Activated B cell treated with CpG ODN at 0.5 μM for 24 hours (primary cell): ENCODE measurements at regions of chr19 and their contacts with region 1.

Region 1: DNA sequence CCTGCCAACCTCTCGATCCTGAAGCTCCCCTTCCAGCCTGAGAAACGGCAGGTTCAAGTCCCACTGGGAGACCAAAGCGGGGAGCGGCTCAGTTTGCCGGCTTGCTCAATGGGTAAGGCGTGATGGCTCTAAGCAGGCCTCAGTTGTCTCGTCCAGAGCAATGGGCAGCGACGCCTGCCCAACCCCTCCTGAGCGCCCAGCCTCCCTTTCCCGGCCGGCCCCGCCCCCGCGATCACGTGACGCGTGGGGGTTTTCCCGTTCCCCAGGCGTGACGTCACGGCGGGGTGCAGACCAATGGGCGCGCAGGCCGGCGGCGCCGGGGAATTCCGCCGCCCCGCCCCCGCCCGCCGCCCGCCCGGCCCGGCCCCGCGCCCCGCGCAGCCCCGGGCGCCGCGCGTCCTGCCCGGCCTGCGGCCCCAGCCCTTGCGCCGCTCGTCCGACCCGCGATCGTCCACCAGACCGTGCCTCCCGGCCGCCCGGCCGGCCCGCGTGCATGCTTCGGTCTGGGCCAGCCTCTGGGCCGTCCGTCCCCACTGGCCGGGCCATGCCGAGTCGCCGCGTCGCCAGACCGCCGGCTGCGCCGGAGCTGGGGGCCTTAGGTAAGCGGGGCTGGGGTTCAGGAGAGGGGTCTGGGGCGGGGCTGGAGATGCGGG is at the start of gene RELB:
- DNase-seq: peak; percentile 99
- ATAC-seq: peak; percentile 43
- H3K4me3 Mint-ChIP-seq: peak within 1 kb of the TSS; percentile 98
- H3K27ac Mint-ChIP-seq: peak within 1 kb of the TSS; percentile 99
- H3K4me1 Mint-ChIP-seq: peaks cover 36% of the 10 kb centered on the region
- H3K27me3 Mint-ChIP-seq: no peaks in the 10 kb centered on the region
- CTCF ChIP-seq: no peak
- total RNA-seq, gene RELB: 117 and 135 TPM in 2 replicates

Region 2: DNA sequence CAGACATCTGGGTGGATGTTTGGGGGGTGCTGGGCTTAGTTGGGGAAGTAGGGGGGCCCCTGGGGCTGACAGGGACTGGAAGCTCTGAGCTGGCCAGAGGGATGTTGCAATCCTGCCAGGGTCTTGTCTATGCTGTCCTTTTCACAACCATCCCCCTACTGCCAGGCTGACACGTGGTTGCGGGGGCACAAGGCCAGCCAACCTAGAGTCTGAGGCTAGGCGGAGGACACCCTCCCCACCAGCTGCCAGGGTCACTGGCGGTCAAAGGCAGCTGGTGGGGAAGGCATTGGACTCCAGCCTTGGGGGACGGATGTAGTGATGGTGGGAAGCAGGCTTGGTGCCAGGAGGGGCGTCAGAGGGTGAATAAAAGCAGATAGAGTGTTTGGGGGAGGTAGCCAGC is 88.4 kb before region 1 on chr19:
- CTCF ChIA-PET with region 1: no interaction called
- POLR2A ChIA-PET with region 1: interaction called, 11 read pairs
- intact Hi-C with region 1: no loop called
- DNase-seq: no peak
- ATAC-seq: no peak
- H3K4me3 Mint-ChIP-seq: no peak overlapping the region
- H3K27ac Mint-ChIP-seq: no peak overlapping the region
- H3K4me1 Mint-ChIP-seq: peaks cover 11% of the 10 kb centered on the region
- H3K27me3 Mint-ChIP-seq: peaks cover 28% of the 10 kb centered on the region
- CTCF ChIP-seq: no peak

Region 3: GRCh38 chr19:44960906-44961728 is 40.1 kb before region 1 on chr19:
- CTCF ChIA-PET with region 1: no interaction called
- POLR2A ChIA-PET with region 1: interaction called, 26 read pairs
- intact Hi-C with region 1: no loop called
- DNase-seq: peak; percentile 22
- ATAC-seq: peak; percentile 93
- H3K4me3 Mint-ChIP-seq: peak overlapping the region; percentile 61
- H3K27ac Mint-ChIP-seq: peak overlapping the region; percentile 86
- H3K4me1 Mint-ChIP-seq: peaks cover 63% of the 10 kb centered on the region
- H3K27me3 Mint-ChIP-seq: no peaks in the 10 kb centered on the region
- CTCF ChIP-seq: no peak

Region 4: GRCh38 chr19:45016388-45017319 is 15.4 kb after region 1 on chr19:
- CTCF ChIA-PET with region 1: interaction called, 4 read pairs
- POLR2A ChIA-PET with region 1: interaction called, 38 read pairs
- intact Hi-C with region 1: loop called (anchors 1 kb)
- DNase-seq: peak; percentile 62
- ATAC-seq: peak; percentile 81
- H3K4me3 Mint-ChIP-seq: peak overlapping the region; percentile 64
- H3K27ac Mint-ChIP-seq: peak overlapping the region; percentile 89
- H3K4me1 Mint-ChIP-seq: peaks cover 22% of the 10 kb centered on the region
- H3K27me3 Mint-ChIP-seq: no peaks in the 10 kb centered on the region
- CTCF ChIP-seq: no peak

Region 5: DNA sequence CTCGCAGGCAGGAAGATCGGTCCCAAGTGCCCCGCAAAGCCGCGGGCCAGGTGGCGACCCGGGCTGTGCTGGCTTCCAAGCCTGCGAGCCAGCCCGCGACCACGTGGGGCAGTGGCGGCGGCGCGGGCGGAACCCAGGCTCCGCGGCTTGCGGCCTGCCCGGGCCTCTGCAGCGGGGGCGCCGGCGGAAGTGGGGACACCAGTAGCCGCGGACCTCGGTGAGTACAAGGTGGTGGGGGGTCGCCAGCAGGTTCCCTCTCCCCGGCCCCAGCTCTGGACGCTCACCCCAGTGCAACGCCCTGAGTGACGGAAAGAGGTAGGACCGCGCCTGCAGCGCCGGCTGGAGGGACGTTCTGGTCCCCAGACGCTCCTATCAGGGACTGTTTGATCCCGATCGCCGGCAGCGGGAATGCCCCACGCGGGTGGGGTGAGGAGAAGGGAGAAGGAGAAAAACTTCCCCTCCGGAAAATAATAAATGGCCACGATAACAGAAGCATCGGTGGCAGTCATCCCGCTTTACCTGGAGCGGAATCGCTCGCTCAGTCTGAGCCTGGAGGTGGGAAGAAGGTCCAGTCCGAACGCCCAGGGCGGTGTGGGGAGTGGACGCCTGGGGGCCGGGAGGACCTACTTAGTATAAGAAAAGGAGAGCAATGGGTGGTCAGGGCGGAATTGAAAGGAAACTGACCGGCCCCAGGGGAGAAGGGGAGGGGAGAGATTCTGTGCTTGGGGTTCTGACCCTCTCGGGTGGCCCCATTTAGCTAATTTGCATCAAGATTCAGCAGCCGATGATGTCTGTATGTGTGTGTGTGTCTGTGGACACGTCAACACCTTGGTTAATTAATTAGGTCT is 78.1 kb after region 1 on chr19 and contains the start of gene GEMIN7:
- CTCF ChIA-PET with region 1: no interaction called
- POLR2A ChIA-PET with region 1: interaction called, 33 read pairs
- intact Hi-C with region 1: loop called (anchors 1 kb)
- DNase-seq: peak; percentile 85
- ATAC-seq: peak; percentile 33
- H3K4me3 Mint-ChIP-seq: peak within 1 kb of the TSS; percentile 97
- H3K27ac Mint-ChIP-seq: peak within 1 kb of the TSS; percentile 90
- H3K4me1 Mint-ChIP-seq: peaks cover 60% of the 10 kb centered on the region
- H3K27me3 Mint-ChIP-seq: no peaks in the 10 kb centered on the region
- CTCF ChIP-seq: no peak
- total RNA-seq, gene GEMIN7: 37.0 and 38.7 TPM in 2 replicates

Region 6: DNA sequence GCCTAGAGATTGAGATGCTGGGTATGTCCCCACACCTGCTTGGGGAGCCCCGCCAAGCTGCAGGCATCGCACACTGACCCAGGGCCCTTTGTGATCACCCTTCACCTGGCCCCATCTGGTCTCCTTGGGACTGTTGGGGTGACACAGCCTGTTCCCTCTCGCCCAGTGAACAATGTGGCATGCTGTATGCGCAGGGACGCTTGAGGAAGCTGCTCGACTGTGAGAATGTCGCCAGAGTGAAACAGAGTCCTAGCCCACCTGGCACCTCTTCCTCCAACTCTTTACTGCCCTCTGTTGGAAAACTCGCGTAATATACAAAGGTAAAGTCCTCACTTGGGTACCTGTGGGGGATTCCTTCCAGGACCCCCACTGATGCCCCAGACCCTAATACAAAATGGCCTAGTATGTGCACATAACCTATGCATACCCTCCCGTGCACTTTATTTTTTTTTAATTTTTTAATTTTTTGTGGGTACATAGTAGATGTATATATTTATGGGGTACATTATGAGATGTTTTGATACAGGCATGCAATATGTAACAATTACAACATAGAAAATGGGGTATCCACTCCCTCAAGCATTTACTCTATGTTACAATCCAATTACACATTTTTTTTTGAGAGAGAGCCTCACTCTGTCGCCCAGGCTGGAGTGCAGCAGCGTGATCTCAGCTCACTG is 186.3 kb after region 1 on chr19:
- CTCF ChIA-PET with region 1: interaction called, 3 read pairs
- POLR2A ChIA-PET with region 1: interaction called, 10 read pairs
- intact Hi-C with region 1: no loop called
- DNase-seq: peak; percentile 27
- ATAC-seq: peak; percentile 96
- H3K4me3 Mint-ChIP-seq: no peak overlapping the region
- H3K27ac Mint-ChIP-seq: no peak overlapping the region
- H3K4me1 Mint-ChIP-seq: peaks cover 23% of the 10 kb centered on the region
- H3K27me3 Mint-ChIP-seq: no peaks in the 10 kb centered on the region
- CTCF ChIP-seq: no peak